ENCODE measurements at regions of chr2 and their contacts with region 1.

Region 1: DNA sequence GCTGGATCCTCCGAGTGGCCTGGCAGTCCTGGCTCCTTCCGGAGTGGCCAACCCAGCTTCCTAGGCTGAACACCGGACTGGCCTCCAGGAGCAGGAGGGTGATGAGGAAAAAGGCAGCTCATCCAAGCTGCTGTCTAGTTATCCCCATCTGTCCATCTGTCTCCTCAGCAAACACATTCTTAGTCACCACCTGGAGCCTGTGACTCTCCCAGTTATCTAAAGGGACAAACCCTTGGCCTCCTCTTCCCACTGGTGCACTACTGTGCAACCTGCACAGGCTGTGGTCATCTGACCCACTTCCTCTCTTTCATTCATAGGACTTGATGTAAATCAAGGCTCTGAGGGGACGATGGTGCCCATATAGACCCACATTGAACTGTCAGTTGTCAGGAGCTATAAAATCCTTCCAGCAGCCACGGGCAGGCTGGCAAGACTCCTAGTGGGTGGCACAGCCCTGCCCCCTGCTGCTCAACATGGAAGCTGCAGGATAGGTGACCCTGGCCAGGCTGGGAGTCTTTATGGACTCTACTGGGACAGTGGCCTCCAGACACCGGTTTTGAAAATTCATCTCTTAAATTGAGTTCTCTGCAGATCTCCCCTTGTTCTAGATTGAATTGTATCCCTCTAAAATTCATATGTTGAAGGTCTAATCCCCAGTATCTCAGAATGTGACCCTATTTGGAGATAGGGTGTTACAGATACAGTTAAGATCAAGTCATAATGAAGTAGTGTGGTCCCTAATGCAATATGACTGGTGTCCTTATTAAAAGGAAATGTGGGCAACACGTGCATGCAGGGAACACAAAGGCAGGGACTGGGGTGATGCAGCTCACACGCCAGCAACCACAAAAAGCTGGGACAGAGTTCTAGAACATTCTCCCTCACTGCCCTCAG is 29.3 kb upstream of the DUSP2 start:
- DNase-seq: no peak
- H3K4me3 ChIP-seq: no peak overlapping the region
- CTCF ChIP-seq: peak; percentile 94

Region 2: DNA sequence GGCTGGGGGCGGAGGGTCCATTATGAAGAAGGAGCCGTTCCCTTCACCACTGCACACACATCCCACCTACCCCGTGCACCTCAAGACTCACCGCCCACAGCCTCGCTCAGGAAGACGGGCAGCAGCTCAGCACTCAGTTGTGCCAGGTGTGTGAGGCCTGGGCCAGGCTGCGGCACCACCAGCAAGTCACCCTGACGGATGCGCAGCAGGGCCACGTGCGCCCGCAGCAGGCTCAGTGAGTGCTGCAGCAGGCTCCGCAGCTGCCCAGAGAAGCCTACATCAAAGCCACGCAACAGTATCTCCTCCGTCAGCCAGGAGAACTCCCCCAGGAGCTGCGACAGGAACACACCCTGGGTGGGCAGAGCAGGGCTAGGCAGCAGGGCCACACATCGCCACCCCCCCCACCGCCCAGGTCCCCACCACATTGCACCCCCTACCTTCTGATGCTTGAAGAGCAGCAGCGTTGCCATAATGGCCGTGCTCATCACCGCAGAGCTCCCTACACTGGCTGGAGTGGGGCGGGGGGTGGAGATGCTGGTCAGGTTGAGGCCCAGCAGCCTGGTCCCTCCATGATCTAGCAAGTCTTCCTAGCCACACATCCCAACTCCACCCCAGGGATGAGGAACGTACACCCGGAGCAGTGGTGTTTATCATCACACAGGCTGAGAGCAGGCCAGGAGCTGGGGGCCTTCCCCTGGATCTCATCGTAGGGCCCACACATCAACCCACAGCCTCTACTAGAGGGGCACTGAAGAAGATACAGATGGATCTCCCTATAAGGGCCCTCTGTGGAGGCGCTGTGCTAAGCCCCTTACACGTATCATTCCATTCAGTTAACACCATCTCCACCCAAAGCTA is 149.9 kb before region 1 on chr2:
- CTCF ChIA-PET with region 1: interaction called, 51 read pairs
- POLR2A ChIA-PET with region 1: no interaction called
- DNase-seq: no peak
- H3K4me3 ChIP-seq: no peak overlapping the region
- CTCF ChIP-seq: no peak

Region 3: DNA sequence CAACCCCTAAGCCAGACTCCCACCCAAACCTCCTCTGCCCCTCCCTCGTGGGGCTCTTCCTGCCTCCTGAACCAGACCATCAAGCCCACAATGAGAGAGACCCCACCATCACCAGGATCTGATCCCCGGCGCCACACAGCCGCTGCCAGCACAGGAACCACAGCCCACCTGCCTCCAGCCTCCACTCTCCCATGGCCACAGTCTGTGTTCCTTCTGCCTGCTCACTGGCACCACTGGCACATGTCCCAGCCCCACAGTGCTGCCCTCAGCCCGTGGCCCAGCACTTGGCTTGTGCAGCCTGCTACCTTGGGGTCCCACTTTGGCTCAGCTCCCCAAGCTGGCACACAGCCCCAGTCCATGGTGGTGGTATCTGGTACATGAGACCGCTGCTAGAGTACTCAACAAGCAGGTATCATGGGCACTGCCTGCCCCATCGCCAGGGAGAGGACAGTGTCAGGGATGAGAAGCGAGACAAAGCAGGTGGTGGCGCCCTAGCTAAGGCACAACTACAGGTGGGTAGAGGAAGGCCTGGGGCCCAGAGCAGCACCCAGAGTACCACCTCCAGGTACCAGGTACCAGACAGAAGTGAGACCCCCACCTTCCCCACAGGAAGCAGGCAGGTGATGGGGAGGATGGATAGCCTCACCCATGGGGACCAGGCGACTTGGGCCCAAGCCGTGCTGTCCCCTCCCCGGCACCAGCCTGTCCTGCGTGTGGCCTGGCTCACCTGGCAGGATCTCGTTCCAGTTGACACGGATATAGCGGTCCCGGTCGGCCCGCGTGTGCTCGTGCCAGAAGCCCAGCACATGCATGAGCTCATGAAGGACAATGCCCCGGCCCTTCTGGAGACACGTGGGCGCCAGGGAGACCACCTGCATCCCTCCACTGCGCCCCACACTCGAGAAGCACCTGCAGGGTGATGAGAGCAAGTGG is 42.4 kb before region 1 on chr2:
- CTCF ChIA-PET with region 1: interaction called, 228 read pairs
- POLR2A ChIA-PET with region 1: interaction called, 4 read pairs
- DNase-seq: no peak
- H3K4me3 ChIP-seq: no peak overlapping the region
- CTCF ChIP-seq: no peak

Region 4: DNA sequence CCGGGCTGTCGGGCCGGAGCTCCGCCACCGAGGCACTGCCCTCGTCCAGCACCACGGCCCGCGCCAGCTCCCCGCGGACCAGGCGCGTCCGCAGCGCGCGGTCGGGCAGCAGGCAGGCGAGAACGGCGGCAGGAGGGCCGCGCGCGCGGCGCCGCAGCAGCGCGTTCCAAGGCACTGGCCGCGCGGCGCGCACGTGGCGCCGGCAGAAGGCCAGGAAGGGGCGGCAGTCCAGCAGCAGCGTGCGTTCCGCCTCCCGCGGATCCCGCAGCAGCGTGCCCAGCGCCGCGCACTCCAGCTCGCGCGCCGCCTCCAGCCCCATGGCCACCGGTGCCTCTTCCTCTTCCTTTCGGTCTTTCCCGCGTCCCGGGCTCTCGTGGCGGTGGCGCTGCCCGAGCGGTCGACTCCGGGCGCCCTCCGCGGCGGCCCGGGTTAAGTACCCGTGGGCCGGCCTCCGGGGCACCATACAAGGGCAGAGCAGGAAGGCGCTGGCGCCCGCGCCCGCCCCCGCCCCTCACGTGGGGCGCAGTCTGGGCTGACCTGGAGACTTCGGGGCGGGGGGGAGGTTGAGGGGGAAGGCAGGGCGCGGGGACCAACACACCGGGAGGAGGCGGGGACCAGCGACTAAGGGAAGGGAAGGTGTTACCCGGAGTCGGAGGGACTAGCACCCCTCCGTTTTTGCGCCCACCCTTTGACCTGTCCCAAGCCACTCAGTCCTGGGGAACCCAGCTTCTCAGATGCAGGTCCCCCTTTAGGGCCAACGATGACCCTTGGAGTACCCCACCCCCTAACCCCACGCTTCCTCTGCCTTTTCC is 29.3 kb before region 1 on chr2 and contains the start of gene DUSP2:
- CTCF ChIA-PET with region 1: interaction called, 228 read pairs
- POLR2A ChIA-PET with region 1: interaction called, 3 read pairs
- DNase-seq: no peak
- H3K4me3 ChIP-seq: peak within 1 kb of the TSS; percentile 61
- CTCF ChIP-seq: no peak

Region 5: GRCh38 chr2:96186562-96186961 is 12.1 kb after region 1 on chr2:
- CTCF ChIA-PET with region 1: interaction called, 67 read pairs
- POLR2A ChIA-PET with region 1: no interaction called
- DNase-seq: no peak
- H3K4me3 ChIP-seq: no peak overlapping the region
- CTCF ChIP-seq: no peak

Region 6: DNA sequence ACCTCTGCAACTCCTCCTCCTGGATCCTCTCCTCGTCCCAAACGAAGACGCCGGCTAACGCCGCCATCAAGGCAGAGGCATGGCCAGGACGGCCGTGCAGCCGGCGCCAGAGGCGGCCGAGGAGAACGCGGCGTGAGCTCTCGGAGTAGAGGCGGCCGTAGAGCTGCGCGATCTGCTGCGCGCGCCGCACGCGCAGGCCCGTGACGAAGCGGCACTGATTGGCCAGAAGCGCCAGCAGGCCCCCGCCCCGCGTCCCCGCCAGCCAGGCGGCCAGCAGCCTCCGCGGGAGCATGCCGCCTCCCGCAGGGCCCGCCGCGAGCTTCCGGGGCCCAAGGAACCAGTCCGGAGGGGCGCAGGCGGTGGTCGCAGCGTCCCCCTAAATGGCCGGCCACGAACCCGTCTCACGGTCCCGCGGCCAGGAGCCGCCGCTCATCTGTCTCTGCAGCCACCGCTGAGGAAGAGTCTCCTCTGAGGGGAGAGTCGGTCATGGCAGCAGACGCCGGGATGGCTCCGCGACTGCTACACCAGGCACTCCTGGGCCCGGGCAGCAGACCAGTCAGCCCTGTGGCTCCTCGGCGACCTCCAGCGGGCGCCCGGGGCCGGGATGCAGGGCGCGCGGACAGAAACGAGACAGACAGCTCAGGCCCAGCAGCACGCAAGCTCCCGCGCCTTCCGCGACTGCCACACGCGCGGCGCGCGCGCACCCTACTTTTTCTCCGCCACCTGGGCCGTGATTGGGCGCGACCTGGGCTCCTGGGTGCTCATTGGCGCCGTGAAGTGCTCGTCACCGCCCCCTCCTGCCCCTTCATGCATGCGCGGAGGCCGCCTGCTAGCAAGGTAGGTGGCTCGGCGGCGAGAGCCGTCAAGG is 33.9 kb after region 1 on chr2 and contains the start of gene STARD7:
- CTCF ChIA-PET with region 1: interaction called, 34 read pairs
- POLR2A ChIA-PET with region 1: no interaction called
- DNase-seq: peak; percentile 80
- H3K4me3 ChIP-seq: peak within 1 kb of the TSS; percentile 86
- CTCF ChIP-seq: peak; percentile 21

Region 7: DNA sequence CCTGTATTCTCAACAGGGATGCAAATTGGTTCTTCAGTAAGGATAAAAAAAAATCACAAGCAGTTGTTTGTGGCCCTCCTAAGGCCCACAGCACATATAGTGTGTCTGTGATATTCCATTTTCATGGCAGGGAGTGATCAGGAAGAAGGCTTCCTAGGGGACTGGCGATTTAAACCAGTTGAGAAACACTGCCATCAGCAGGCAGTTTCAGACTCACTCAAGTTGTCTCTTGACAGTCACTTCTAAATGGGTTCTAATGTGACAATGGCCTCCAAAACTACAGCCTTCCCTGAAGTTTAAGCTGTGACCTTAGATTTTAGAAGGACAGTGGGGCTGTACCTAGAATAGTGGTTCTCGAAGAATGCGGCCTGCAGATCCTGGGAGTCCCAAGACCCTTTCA is 97.5 kb after region 1 on chr2:
- CTCF ChIA-PET with region 1: interaction called, 18 read pairs
- POLR2A ChIA-PET with region 1: no interaction called
- DNase-seq: no peak
- H3K4me3 ChIP-seq: no peak overlapping the region
- CTCF ChIP-seq: no peak

Measured in AG04449 (cell line).